Activated CD4-positive, alpha-beta memory T cell treated with anti-CD3 and anti-CD28 coated beads for 36 hours (primary cell): ENCODE measurements at regions of chr17 and their contacts with region 1.

Region 1: DNA sequence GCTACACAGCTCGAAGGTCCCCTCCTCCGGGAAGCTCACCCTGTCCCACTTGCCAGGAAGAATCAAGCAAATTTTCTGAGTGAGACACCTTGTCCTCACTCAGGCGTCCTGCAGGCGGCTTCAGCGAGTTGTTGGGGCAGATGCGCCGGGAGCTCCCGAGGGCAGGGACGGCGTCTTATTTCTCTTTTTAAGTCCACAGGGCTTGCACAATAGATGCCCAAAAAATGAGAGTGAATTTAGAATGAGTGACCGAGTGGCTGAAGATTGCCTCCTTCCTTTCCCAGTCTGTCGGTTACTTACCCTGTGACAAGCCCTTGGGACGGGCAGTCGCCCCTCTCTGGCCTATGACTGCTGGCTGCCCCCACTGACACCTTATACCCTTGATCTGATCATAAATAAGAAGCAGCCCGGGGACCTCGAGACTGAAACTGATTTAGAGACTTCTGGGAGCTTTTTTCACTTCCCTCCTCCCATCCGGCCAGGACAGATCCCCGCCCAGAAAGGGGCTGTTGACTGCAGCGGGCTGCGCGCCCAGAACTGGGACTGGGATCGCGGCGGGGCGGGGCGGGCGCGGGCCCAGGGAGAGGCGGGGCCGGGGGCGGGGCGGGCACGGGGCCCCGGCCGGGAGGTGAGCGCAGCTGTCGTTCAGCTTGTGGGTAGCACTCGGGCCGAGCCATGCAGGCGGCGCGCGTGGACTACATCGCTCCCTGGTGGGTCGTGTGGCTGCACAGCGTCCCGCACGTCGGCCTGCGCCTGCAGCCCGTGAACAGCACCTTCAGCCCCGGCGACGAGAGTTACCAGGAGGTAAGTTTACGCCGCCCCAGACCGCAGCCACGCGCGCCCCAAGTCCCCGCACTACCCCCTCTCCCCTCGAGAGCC is at the start of gene TTYH2:
- DNase-seq: peak; percentile 82
- H3K4me3 Mint-ChIP-seq: peak within 1 kb of the TSS; percentile 74
- H3K27ac Mint-ChIP-seq: peak within 1 kb of the TSS; percentile 36
- H3K4me1 Mint-ChIP-seq: peaks cover 68% of the 10 kb centered on the region
- H3K27me3 Mint-ChIP-seq: no peaks in the 10 kb centered on the region
- total RNA-seq, gene TTYH2: 7.6 to 7.9 TPM

Region 2: DNA sequence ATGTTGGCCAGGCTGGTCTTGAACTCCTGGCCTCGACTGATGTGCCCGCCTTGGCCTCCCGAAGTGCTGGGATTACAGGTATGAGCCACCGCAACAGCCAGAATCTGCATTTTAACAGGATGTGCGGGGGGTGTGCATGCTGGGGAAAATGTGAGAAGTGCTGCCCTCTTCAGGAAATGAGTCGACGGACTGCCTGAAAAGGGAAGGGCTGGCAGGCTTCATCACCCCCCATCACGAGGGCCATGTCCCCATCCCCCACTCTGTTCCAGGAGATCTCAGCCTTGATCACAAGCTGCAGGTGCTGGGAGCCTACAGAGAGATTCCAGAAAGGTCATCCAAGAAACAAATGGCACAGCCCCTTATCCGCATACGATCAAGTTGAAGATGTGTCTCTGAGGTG is 205.0 kb before region 1 on chr17:
- CTCF ChIA-PET with region 1: no interaction called
- POLR2A ChIA-PET with region 1: no interaction called
- intact Hi-C with region 1: no loop called
- DNase-seq: peak; percentile 75
- H3K4me3 Mint-ChIP-seq: no peak overlapping the region
- H3K27ac Mint-ChIP-seq: no peak overlapping the region
- H3K4me1 Mint-ChIP-seq: peaks cover 21% of the 10 kb centered on the region
- H3K27me3 Mint-ChIP-seq: peaks cover 10% of the 10 kb centered on the region

Region 3: DNA sequence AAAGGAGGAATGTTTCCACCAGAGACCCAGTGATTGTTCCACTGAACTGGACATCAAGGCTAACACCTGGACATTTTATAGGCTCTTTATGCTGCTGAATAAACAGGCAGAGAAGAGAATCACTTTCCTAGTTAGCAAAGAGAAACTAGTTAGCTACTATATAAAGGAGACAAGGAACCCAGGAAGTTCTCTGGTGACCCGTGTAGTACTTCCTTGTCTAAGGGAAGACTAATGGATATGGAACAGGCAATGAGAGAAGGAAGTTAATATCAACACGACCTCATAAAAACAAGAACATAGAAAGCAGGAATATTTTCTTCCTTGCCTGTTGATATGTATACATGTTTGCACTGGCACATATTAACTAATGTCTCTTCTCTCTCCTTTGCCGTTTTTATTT is 40.5 kb before region 1 on chr17:
- CTCF ChIA-PET with region 1: no interaction called
- POLR2A ChIA-PET with region 1: no interaction called
- intact Hi-C with region 1: no loop called
- DNase-seq: no peak
- H3K4me3 Mint-ChIP-seq: no peak overlapping the region
- H3K27ac Mint-ChIP-seq: no peak overlapping the region
- H3K4me1 Mint-ChIP-seq: no peaks in the 10 kb centered on the region
- H3K27me3 Mint-ChIP-seq: peaks cover 30% of the 10 kb centered on the region

Region 4: GRCh38 chr17:74190172-74190571 is 23.0 kb before region 1 on chr17:
- CTCF ChIA-PET with region 1: no interaction called
- POLR2A ChIA-PET with region 1: no interaction called
- intact Hi-C with region 1: no loop called
- DNase-seq: no peak
- H3K4me3 Mint-ChIP-seq: no peak overlapping the region
- H3K27ac Mint-ChIP-seq: no peak overlapping the region
- H3K4me1 Mint-ChIP-seq: no peaks in the 10 kb centered on the region
- H3K27me3 Mint-ChIP-seq: peaks cover 15% of the 10 kb centered on the region

Region 5: GRCh38 chr17:74354123-74354522 is 141.0 kb after region 1 on chr17:
- CTCF ChIA-PET with region 1: interaction called, 7 read pairs
- POLR2A ChIA-PET with region 1: no interaction called
- intact Hi-C with region 1: loop called (anchors 1 kb)
- DNase-seq: peak; percentile 85
- H3K4me3 Mint-ChIP-seq: no peak overlapping the region
- H3K27ac Mint-ChIP-seq: no peak overlapping the region
- H3K4me1 Mint-ChIP-seq: peaks cover 8% of the 10 kb centered on the region
- H3K27me3 Mint-ChIP-seq: peaks cover 60% of the 10 kb centered on the region